Activated naive CD4-positive, alpha-beta T cell treated with anti-CD3 and anti-CD28 coated beads, Interleukin-2, amount 10 ng/mL, durations not matched to agents 7 days and 5 days (primary cell): ENCODE measurements at regions of chr16 and their contacts with region 1.

Region 1: GRCh38 chr16:30692381-30693064 is 6.4 kb upstream of the SRCAP start:
- DNase-seq: no peak
- H3K4me3 Mint-ChIP-seq: no peak overlapping the region
- H3K27ac Mint-ChIP-seq: no peak overlapping the region
- H3K4me1 Mint-ChIP-seq: peaks cover 25% of the 10 kb centered on the region
- H3K27me3 Mint-ChIP-seq: peaks cover 5% of the 10 kb centered on the region

Region 2: DNA sequence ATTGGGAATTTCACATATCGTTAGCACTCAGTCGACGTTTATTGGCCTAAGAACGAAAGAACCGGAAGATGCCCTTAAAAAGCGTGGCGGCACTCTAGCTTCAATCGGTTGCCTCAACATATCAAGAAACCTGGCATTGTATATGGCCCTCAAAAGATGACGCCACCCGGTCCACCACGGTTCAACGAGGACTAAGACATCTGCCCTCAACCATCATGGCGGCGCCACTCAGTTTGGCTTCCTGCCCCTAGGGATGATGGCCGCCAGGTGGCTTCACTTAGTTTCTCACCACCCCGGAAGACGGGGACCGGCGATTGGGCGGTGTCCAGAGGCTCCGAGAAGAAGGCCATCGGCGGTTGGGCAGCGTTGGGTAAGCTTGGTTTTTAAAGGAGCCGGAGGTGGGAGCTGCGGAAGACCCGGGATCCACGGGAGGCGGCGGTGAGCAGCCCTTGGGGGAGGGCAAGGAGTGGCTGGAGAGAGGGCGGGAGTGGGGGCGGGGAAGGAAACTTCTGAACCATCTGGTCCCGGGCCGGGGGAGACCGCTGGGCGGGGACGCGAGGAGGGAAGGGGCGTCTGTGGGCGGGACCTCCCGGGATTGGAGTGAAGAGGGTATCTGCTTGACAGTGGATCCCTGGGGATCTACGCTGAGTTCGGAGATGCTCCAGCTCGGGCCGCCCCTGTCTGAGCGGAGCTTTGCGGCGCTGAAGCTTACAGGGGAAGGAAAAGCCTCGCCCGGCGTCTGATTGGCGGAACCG is 42.0 kb before region 1 on chr16 and contains the start of gene PRR14:
- CTCF ChIA-PET with region 1: interaction called, 22 read pairs
- DNase-seq: peak; percentile 100
- H3K4me3 Mint-ChIP-seq: peak within 1 kb of the TSS; percentile 99
- H3K27ac Mint-ChIP-seq: peak within 1 kb of the TSS; percentile 99
- H3K4me1 Mint-ChIP-seq: peaks cover 39% of the 10 kb centered on the region
- H3K27me3 Mint-ChIP-seq: peaks cover 8% of the 10 kb centered on the region

Region 3: DNA sequence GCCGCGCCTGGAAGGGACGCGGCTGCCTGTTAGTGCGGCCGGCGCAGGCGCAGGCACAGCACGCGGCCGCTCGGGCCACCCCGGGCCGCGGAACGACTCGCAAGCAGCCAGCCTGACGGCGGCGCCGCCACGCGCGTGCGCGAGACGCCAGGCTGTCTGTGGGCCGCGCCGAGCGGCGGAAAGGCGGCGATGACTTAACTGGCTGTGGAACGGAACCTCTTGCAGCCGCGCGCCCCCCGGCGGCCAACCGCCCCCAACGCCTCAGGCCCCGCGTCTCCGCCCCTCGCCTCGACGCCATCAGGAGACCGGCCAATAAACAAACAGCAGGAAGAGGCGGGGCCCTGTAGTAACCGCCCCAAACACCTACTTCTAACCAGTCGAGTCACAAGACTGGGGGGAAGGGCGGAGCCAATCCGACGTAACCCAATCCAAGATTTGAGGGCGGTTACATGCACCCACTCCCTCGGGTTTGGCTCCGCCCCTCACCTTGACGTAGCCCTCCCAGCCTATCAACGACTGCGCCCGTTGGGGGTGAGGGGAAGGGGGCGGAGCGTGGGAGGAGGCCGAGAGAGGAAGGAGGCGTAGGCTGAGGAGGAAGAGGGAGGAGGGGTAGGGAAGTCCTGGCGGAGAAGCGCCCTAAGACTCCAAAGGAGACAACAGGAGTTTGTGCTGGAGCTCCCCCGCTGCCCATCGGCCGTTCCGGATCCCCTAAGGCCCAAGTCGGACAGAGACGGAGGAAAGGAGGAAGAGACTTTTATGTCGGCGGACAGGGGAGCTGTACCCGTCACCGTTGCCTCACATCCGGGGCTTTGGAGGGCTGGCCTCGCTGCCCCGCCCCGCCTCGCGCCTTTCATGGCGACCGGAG is 34.4 kb before region 1 on chr16 and contains the start of gene FBRS:
- CTCF ChIA-PET with region 1: interaction called, 56 read pairs
- DNase-seq: peak; percentile 100
- H3K4me3 Mint-ChIP-seq: peak within 1 kb of the TSS; percentile 79
- H3K27ac Mint-ChIP-seq: peak within 1 kb of the TSS; percentile 99
- H3K4me1 Mint-ChIP-seq: peaks cover 56% of the 10 kb centered on the region
- H3K27me3 Mint-ChIP-seq: no peaks in the 10 kb centered on the region

Region 4: DNA sequence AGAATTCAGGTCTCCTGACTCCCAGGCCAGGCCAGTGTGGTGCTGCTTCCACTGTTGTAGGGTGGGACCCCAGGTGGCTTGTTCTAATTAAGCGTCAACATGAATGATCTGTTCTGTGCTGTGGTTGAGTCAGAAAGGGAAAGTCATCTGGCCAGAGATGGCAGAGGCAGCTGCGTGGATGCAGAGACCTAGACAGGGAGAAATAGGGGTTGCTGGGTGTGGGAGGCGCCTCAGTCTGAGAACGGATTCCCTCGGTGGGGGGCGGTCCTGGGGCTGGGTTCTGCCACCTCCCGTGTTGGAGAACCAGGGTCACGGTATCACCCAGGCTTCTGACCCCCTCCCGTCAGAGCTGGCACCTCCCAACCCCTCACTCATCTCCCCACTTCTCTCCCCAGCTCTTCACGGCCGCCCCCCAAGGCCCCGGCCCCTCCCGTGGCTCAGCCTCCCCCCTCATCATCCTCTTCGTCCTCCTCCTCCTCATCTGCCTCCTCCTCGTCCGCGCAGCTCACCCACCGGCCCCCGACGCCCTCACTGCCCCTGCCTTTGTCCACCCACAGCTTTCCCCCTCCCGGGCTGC is 28.6 kb before region 1 on chr16:
- CTCF ChIA-PET with region 1: interaction called, 56 read pairs
- DNase-seq: no peak
- H3K4me3 Mint-ChIP-seq: no peak overlapping the region
- H3K27ac Mint-ChIP-seq: no peak overlapping the region
- H3K4me1 Mint-ChIP-seq: peaks cover 41% of the 10 kb centered on the region
- H3K27me3 Mint-ChIP-seq: no peaks in the 10 kb centered on the region

Region 5: GRCh38 chr16:30731411-30731810 is 38.9 kb after region 1 on chr16:
- CTCF ChIA-PET with region 1: no interaction called
- DNase-seq: no peak
- H3K4me3 Mint-ChIP-seq: no peak overlapping the region
- H3K27ac Mint-ChIP-seq: no peak overlapping the region
- H3K4me1 Mint-ChIP-seq: no peaks in the 10 kb centered on the region
- H3K27me3 Mint-ChIP-seq: no peaks in the 10 kb centered on the region